ENCODE measurements at regions of chr21 and their contacts with region 1.

Region 1: GRCh38 chr21:39313571-39314142 is at the start of gene BRWD1:
- DNase-seq: peak; percentile 86 to 95 (median 94)
- ATAC-seq: peak; percentile 83 to 84
- H3K4me3 ChIP-seq: peak within 1 kb of the TSS; percentile 97
- H3K27ac ChIP-seq: peak within 1 kb of the TSS; percentile 93
- H3K4me1 ChIP-seq: peaks cover 4% of the 10 kb centered on the region
- H3K27me3 ChIP-seq: no peaks in the 10 kb centered on the region
- total RNA-seq, gene BRWD1: 31.0 to 36.9 (median 32.7) TPM

Region 2: DNA sequence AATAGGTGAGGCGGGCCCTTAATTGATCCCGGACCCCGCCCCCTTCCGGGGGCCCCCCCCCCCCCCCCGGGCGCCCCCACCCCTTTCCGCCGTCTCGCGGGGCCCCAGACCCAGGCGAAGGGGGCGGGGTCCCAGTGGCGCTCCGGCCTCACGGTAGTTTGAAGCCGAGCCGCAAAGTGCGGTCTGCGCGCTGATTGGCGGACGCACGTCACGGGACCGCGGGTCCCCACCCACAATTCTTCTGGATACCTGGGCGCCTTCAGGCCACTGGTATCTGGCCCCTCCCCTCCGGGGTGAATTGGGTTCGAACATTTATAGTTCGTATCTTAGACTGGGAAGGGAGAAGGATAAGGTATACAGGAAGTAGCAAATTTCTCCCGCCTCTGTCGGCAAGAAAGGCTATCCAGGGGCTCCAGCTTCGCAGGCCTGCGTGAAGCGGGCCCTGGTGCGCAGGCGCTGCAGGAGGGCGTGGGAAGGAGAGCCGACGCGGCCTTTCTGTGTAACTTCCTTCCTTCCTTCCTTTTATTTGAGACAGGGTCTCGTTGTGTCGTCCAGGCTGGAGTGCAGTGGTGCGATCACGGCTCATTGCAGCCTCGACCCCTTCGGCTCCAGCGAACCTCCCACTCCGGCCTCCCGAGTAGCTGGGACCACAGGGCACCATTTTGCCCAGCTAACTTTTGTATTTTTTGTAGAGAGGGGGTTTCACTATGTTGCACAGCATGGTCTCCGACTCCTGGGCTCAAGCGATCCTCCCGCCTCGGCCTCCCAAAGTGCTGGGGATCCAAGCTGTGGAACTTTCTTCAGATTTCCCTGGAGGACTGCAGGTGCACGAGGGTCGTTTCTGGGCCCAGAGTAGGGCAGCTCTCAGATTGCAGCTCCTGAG is 35.8 kb after region 1 on chr21:
- intact Hi-C with region 1: loop called in 2 of 4 experiments (anchors 5 kb)
- DNase-seq: peak; percentile 97 to 98 (median 98)
- ATAC-seq: peak; percentile 97
- H3K4me3 ChIP-seq: peak overlapping the region; percentile 89
- H3K27ac ChIP-seq: peak overlapping the region; percentile 85
- H3K4me1 ChIP-seq: peaks cover 3% of the 10 kb centered on the region
- H3K27me3 ChIP-seq: no peaks in the 10 kb centered on the region

Region 3: DNA sequence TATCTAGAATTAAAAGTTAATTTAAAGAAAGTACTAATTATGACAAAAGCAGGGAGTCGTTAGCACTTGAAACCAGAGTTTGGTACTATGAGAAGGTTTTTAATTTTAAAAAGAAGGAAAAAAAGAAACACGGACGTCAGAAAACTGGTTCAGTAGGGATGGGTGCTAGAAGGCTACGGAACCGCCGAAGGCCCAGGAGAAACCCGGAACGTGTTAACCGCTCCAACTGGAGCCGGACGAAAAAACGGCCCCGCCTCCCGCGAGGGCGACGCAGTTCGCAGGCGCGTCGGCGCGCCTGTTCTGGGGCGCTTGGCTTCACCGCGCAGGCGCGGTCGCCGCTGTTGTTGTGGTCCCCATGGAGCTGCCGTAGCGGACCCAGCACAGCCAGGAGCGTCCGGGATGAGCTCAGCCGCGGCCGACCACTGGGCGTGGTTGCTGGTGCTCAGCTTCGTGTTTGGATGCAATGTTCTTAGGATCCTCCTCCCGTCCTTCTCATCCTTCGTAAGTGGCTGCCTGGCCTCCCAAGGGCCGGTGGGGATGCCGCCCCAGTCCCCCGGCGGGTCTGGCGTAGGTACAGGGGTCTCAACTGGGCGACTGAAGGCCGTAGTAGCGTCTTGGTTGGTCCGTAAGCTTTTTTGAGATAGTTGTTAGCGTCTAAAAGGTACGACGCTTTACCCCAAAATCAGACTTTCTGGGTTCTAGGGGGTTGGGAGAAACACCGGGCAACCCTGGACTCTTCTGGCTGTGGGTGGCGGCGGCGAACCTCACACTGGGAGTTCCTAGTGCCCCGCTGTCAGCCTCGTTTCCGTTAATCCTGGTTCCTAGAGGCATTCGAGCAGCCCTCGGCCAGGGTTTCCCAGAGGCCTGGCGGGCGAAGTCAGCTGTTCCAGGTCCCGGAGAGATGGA is 66.6 kb after region 1 on chr21:
- intact Hi-C with region 1: loop called in 3 of 4 experiments (anchors 2 to 10 kb)
- DNase-seq: peak; percentile 98 to 99 (median 99)
- ATAC-seq: peak; percentile 99
- H3K4me3 ChIP-seq: peak overlapping the region; percentile 58
- H3K27ac ChIP-seq: peak overlapping the region; percentile 78
- H3K4me1 ChIP-seq: peaks cover 2% of the 10 kb centered on the region
- H3K27me3 ChIP-seq: no peaks in the 10 kb centered on the region

Region 4: DNA sequence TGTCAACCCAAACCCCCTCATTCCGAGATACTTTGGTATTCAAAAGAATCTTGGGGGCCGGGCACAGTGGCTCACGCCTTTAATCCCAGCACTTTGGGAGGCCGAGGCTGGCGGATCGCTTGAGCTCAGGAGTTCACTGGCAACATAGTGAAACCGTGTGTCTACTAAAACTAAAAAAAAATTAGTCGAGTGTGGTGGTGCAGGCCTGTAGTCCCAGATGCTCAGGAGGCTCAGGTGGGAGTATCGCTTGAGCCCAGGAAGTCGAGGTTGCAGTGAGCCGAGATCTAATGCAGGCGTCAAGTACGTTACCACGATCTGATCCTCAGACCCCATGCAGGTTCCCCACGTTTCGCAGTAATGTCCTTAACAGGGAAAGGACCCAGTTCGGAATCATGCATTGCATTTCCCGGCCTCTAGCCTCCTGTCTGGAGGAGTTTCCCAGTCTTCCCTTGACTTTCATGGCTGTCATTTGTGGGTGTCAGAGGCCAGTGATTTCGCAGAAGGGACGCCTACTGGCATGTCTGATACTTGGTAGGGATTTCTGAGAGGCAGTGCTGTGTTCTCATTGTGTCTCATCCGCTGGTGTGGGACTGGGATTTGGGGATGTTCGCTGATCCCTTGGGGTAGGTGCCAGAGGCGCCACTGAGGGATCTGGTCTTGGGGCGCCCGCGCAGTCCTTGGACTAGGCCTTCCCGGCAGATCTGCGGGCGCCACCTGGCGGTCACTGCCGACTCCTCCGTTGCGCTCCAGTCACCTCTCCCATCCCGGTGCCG is 74.6 kb after region 1 on chr21:
- intact Hi-C with region 1: loop called in 3 of 4 experiments (anchors 2 to 10 kb)
- DNase-seq: peak; percentile 94 to 97 (median 97)
- ATAC-seq: peak; percentile 88 to 90
- H3K4me3 ChIP-seq: peak overlapping the region; percentile 73
- H3K27ac ChIP-seq: peak overlapping the region; percentile 50
- H3K4me1 ChIP-seq: peaks cover 4% of the 10 kb centered on the region
- H3K27me3 ChIP-seq: no peaks in the 10 kb centered on the region

Region 5: DNA sequence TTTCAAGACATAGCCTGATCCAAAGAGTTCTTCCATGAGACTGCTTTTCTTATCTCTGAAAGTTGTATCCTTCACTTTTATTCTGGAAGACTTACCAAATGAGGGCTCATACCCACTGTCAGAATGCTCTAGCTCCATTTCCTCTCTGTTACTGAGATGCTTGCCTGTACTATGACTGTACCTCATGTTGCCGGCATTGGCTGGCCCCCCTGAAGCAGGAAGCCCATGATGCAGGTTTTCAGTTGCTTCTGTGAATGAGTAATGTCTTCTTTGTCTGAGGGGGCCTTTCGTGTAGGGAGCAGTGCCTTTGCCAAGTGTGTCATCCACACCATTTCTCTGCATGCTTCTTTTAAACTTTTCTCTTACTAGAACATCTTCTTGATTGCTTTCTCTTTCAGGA is 92.4 kb after region 1 on chr21:
- intact Hi-C with region 1: no loop called
- DNase-seq: no peak
- ATAC-seq: no peak
- H3K4me3 ChIP-seq: no peak overlapping the region
- H3K27ac ChIP-seq: no peak overlapping the region
- H3K4me1 ChIP-seq: no peaks in the 10 kb centered on the region
- H3K27me3 ChIP-seq: no peaks in the 10 kb centered on the region